PC-3 (cell line): ENCODE measurements at regions of chr12 and their contacts with region 1.

Region 1: DNA sequence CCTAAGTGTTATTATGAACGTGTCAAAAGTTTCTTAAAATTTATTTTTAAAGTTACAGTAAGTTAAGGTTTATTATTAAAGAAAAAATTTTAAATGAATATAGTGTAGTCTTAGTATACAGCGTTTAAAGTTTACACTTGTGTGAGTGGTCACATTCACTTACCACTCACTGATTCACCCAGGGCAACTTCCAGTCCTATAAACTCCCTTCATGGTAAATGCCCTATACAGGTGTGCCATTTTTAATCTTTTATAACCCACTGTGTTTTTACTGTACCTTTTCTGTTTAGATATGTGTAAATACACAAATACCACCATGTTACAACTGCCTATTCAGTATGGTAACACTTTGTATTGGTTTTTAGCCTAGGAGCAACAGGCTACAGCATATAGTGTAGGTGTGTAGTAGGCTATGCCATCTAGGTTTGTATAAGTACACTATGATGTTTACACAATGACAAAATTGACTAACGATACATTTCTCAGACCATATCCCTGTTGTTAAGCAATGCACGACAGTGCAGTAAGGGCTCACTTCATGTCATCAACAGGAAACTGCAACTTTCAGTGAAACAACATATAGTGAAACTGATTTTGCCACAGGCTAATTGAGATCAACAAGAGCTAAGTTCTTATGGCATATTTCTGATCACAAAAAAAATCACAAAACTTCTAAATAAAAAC is 112.0 kb upstream of the TMCC3 start:
- DNase-seq: peak; percentile 66
- ATAC-seq: peak; percentile 53
- H3K4me3 ChIP-seq: no peak overlapping the region
- H3K27ac ChIP-seq: peak overlapping the region; percentile 82
- H3K4me1 ChIP-seq: peaks cover 24% of the 10 kb centered on the region
- H3K27me3 ChIP-seq: no peaks in the 10 kb centered on the region
- CTCF ChIP-seq: no peak

Region 2: GRCh38 chr12:94545935-94546771 is 216.2 kb before region 1 on chr12:
- CTCF ChIA-PET with region 1: no interaction called
- POLR2A ChIA-PET with region 1: no interaction called
- intact Hi-C with region 1: loop called (anchors 2 kb)
- DNase-seq: peak; percentile 80
- ATAC-seq: peak; percentile 98
- H3K4me3 ChIP-seq: no peak overlapping the region
- H3K27ac ChIP-seq: no peak overlapping the region
- H3K4me1 ChIP-seq: no peaks in the 10 kb centered on the region
- H3K27me3 ChIP-seq: no peaks in the 10 kb centered on the region
- CTCF ChIP-seq: peak; percentile 92

Region 3: DNA sequence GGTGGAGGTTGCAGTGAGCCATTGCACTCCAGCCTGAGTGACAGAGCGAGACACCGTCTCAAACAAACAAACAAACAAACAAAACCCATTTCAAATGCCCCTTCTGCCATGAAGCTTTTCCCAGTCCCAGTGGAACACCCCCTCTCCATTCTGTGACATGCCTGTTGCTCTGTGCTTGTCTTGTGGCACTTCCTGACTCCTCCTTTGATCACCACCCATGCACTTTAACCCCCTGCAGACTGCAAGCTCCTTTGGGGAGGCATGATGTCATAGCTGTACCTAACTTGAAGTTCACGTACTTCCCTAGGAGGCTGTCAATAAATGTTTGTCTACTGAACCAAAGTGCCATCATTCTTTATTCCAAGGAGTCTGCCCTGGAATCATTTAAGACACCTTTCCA is 176.8 kb before region 1 on chr12:
- CTCF ChIA-PET with region 1: no interaction called
- POLR2A ChIA-PET with region 1: no interaction called
- intact Hi-C with region 1: no loop called
- DNase-seq: no peak
- ATAC-seq: no peak
- H3K4me3 ChIP-seq: no peak overlapping the region
- H3K27ac ChIP-seq: no peak overlapping the region
- H3K4me1 ChIP-seq: peaks cover 22% of the 10 kb centered on the region
- H3K27me3 ChIP-seq: no peaks in the 10 kb centered on the region
- CTCF ChIP-seq: no peak

Region 4: GRCh38 chr12:94596596-94596995 is 165.8 kb before region 1 on chr12:
- CTCF ChIA-PET with region 1: no interaction called
- POLR2A ChIA-PET with region 1: no interaction called
- intact Hi-C with region 1: loop called (anchors 5 kb)
- DNase-seq: peak; percentile 98
- ATAC-seq: peak; percentile 36
- H3K4me3 ChIP-seq: no peak overlapping the region
- H3K27ac ChIP-seq: peak overlapping the region; percentile 56; the same call in 1 of the 2 replicates
- H3K4me1 ChIP-seq: peaks cover 68% of the 10 kb centered on the region
- H3K27me3 ChIP-seq: no peaks in the 10 kb centered on the region
- CTCF ChIP-seq: no peak

Region 5: GRCh38 chr12:94649349-94650142 is 112.9 kb before region 1 on chr12:
- CTCF ChIA-PET with region 1: no interaction called
- POLR2A ChIA-PET with region 1: no interaction called
- intact Hi-C with region 1: loop called (anchors 5 kb)
- DNase-seq: peak; percentile 40
- ATAC-seq: peak; percentile 53
- H3K4me3 ChIP-seq: peak overlapping the region; percentile 89
- H3K27ac ChIP-seq: peak overlapping the region; percentile 55
- H3K4me1 ChIP-seq: peaks cover 33% of the 10 kb centered on the region
- H3K27me3 ChIP-seq: no peaks in the 10 kb centered on the region
- CTCF ChIP-seq: peak; percentile 53

Region 6: GRCh38 chr12:94704452-94705306 is 57.7 kb before region 1 on chr12:
- CTCF ChIA-PET with region 1: interaction called, 3 read pairs
- POLR2A ChIA-PET with region 1: no interaction called
- intact Hi-C with region 1: loop called (anchors 2 kb)
- DNase-seq: peak; percentile 96
- ATAC-seq: peak; percentile 96
- H3K4me3 ChIP-seq: 0 out of 2 replicates have a peak overlapping the region, but pooled peaks have one; percentile 26
- H3K27ac ChIP-seq: peak overlapping the region; percentile 32
- H3K4me1 ChIP-seq: peaks cover 23% of the 10 kb centered on the region
- H3K27me3 ChIP-seq: no peaks in the 10 kb centered on the region
- CTCF ChIP-seq: no peak

Region 7: GRCh38 chr12:94922561-94922960 is 160.2 kb after region 1 on chr12:
- CTCF ChIA-PET with region 1: no interaction called
- POLR2A ChIA-PET with region 1: no interaction called
- intact Hi-C with region 1: no loop called
- DNase-seq: no peak
- ATAC-seq: no peak
- H3K4me3 ChIP-seq: no peak overlapping the region
- H3K27ac ChIP-seq: no peak overlapping the region
- H3K4me1 ChIP-seq: no peaks in the 10 kb centered on the region
- H3K27me3 ChIP-seq: no peaks in the 10 kb centered on the region
- CTCF ChIP-seq: no peak

Region 8: DNA sequence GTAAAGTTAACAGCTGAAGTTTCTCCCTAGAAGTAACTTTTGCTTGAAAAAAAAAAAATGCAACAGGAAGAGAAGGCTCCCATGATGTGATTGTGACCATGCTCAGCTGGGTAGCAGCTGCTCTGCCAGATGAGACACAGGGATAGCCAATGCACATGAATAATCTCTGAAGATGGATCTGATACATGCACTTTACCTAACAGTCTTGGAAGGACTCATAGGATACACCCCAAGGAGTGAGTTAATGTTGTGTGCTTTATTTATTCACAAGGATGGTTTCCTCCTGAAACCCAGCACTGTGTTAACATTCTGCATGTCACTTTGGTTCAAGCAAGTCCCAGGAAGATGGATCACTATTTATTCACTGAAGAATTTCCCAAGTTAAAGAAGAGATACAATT is 194.6 kb after region 1 on chr12:
- CTCF ChIA-PET with region 1: no interaction called
- POLR2A ChIA-PET with region 1: interaction called, 10 read pairs
- intact Hi-C with region 1: no loop called
- DNase-seq: no peak
- ATAC-seq: no peak
- H3K4me3 ChIP-seq: no peak overlapping the region
- H3K27ac ChIP-seq: no peak overlapping the region
- H3K4me1 ChIP-seq: peaks cover 24% of the 10 kb centered on the region
- H3K27me3 ChIP-seq: no peaks in the 10 kb centered on the region
- CTCF ChIP-seq: no peak

Region 9: GRCh38 chr12:94980577-94980976 is 218.2 kb after region 1 on chr12:
- CTCF ChIA-PET with region 1: no interaction called
- POLR2A ChIA-PET with region 1: no interaction called
- intact Hi-C with region 1: loop called (anchors 10 kb)
- DNase-seq: peak; percentile 2
- ATAC-seq: no peak
- H3K4me3 ChIP-seq: no peak overlapping the region
- H3K27ac ChIP-seq: no peak overlapping the region
- H3K4me1 ChIP-seq: no peaks in the 10 kb centered on the region
- H3K27me3 ChIP-seq: no peaks in the 10 kb centered on the region
- CTCF ChIP-seq: peak; percentile 33; the same call in 1 of the 2 replicates